Mammary epithelial cell (primary cell): ENCODE measurements at regions of chr5 and their contacts with region 1.

Region 1: GRCh38 chr5:122408592-122409224 is 96.7 kb downstream of the SNCAIP start:
- DNase-seq: no peak
- H3K4me3 ChIP-seq: no peak overlapping the region
- H3K27ac ChIP-seq: no peak overlapping the region
- H3K4me1 ChIP-seq: no peaks in the 10 kb centered on the region
- H3K27me3 ChIP-seq: peaks cover under 1% of the 10 kb centered on the region
- CTCF ChIP-seq: no peak

Region 2: GRCh38 chr5:122371511-122372151 is 37.1 kb before region 1 on chr5:
- CTCF ChIA-PET with region 1: no interaction called
- dilution Hi-C with region 1: loop called (anchors 5 kb)
- in situ Hi-C with region 1: no loop called
- intact Hi-C with region 1: no loop called
- DNase-seq: no peak
- H3K4me3 ChIP-seq: no peak overlapping the region
- H3K27ac ChIP-seq: no peak overlapping the region
- H3K4me1 ChIP-seq: no peaks in the 10 kb centered on the region
- H3K27me3 ChIP-seq: no peaks in the 10 kb centered on the region
- CTCF ChIP-seq: no peak